PC-3 (cell line): ENCODE measurements at regions of chr17 and their contacts with region 1.

Region 1: GRCh38 chr17:56819431-56820145 is 14.1 kb downstream of the C17orf67 start:
- DNase-seq: peak; percentile 95
- ATAC-seq: peak; percentile 83
- H3K4me3 ChIP-seq: peak overlapping the region; percentile 46; the same call in 1 of the 2 replicates
- H3K27ac ChIP-seq: no peak overlapping the region
- H3K4me1 ChIP-seq: no peaks in the 10 kb centered on the region
- H3K27me3 ChIP-seq: no peaks in the 10 kb centered on the region
- CTCF ChIP-seq: peak; percentile 92

Region 2: DNA sequence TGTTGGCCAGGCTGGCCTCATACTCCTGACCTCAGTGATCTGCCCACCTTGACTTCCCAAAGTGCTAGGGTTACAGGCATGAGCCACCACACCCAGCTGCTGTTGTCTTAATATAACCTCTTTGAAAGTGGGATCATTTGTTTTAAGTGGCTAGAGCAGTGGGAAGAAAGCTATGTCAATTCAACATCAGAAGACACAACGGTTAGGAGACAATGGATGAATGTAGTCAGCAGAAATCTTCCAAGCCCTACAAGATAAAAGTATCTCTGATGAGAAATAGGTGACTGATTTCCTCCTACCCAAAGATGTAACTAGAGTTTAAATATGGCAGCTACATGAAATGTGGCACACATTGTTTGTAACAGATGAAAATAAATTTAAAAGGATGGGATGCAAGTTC is 114.3 kb after region 1 on chr17:
- CTCF ChIA-PET with region 1: no interaction called
- POLR2A ChIA-PET with region 1: no interaction called
- intact Hi-C with region 1: no loop called
- DNase-seq: no peak
- ATAC-seq: no peak
- H3K4me3 ChIP-seq: no peak overlapping the region
- H3K27ac ChIP-seq: no peak overlapping the region
- H3K4me1 ChIP-seq: peaks cover 15% of the 10 kb centered on the region
- H3K27me3 ChIP-seq: no peaks in the 10 kb centered on the region
- CTCF ChIP-seq: no peak

Region 3: GRCh38 chr17:56960596-56961538 is 141.3 kb after region 1 on chr17 and contains the start of gene COIL:
- CTCF ChIA-PET with region 1: no interaction called
- POLR2A ChIA-PET with region 1: no interaction called
- intact Hi-C with region 1: loop called (anchors 5 kb)
- DNase-seq: peak; percentile 98
- ATAC-seq: peak; percentile 94
- H3K4me3 ChIP-seq: peak within 1 kb of the TSS; percentile 98
- H3K27ac ChIP-seq: peak within 1 kb of the TSS; percentile 83
- H3K4me1 ChIP-seq: peaks cover 24% of the 10 kb centered on the region
- H3K27me3 ChIP-seq: no peaks in the 10 kb centered on the region
- CTCF ChIP-seq: peak; percentile 99
- total RNA-seq, gene COIL: 22.3 and 22.9 TPM in 2 replicates

Region 4: GRCh38 chr17:57178839-57179238 is 359.3 kb after region 1 on chr17:
- CTCF ChIA-PET with region 1: no interaction called
- POLR2A ChIA-PET with region 1: no interaction called
- intact Hi-C with region 1: no loop called
- DNase-seq: no peak
- ATAC-seq: no peak
- H3K4me3 ChIP-seq: no peak overlapping the region
- H3K27ac ChIP-seq: no peak overlapping the region
- H3K4me1 ChIP-seq: no peaks in the 10 kb centered on the region
- H3K27me3 ChIP-seq: no peaks in the 10 kb centered on the region
- CTCF ChIP-seq: no peak